ENCODE measurements at regions of chr5 and their contacts with region 1.

Region 1: GRCh38 chr5:178279725-178280438 is 47.3 kb upstream of the PHYKPL start:
- DNase-seq: peak; percentile 87
- H3K4me3 Mint-ChIP-seq: no peak overlapping the region
- H3K27ac Mint-ChIP-seq: no peak overlapping the region
- H3K4me1 Mint-ChIP-seq: peaks cover 30% of the 10 kb centered on the region
- H3K27me3 Mint-ChIP-seq: no peaks in the 10 kb centered on the region
- CTCF ChIP-seq: peak; percentile 99

Region 2: DNA sequence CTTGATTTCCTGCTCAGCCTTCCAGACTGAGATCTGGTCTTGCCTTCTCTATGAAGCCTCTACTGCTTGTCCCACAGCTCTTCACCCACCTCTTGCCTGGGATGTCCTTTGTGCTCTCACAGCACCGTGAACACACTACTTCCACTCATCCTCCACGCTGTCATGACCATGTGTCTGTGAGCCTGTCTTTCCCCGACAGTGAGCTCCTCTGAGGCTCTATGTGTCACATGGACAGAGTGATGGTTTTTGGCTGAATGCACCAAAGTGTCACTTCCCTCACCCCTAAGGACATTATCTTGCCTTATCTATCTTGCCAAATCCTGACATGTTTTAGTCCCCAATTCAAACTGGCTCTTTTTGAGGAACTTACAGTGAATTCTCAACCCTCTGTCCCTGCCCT is 58.6 kb before region 1 on chr5:
- CTCF ChIA-PET with region 1: no interaction called
- POLR2A ChIA-PET with region 1: no interaction called
- intact Hi-C with region 1: no loop called
- DNase-seq: no peak
- H3K4me3 Mint-ChIP-seq: no peak overlapping the region
- H3K27ac Mint-ChIP-seq: peak overlapping the region; percentile 8
- H3K4me1 Mint-ChIP-seq: peaks cover 21% of the 10 kb centered on the region
- H3K27me3 Mint-ChIP-seq: no peaks in the 10 kb centered on the region
- CTCF ChIP-seq: no peak

Region 3: GRCh38 chr5:178461004-178461730 is 181.3 kb after region 1 on chr5:
- CTCF ChIA-PET with region 1: interaction called, 13 read pairs
- POLR2A ChIA-PET with region 1: no interaction called
- intact Hi-C with region 1: no loop called
- DNase-seq: peak; percentile 77
- H3K4me3 Mint-ChIP-seq: no peak overlapping the region
- H3K27ac Mint-ChIP-seq: no peak overlapping the region
- H3K4me1 Mint-ChIP-seq: peaks cover 5% of the 10 kb centered on the region
- H3K27me3 Mint-ChIP-seq: no peaks in the 10 kb centered on the region
- CTCF ChIP-seq: peak; percentile 95

Region 4: GRCh38 chr5:178551059-178551458 is 271.2 kb after region 1 on chr5:
- CTCF ChIA-PET with region 1: interaction called, 266 read pairs
- POLR2A ChIA-PET with region 1: interaction called, 4 read pairs
- intact Hi-C with region 1: loop called (anchors 1 kb)
- DNase-seq: peak; percentile 46
- H3K4me3 Mint-ChIP-seq: no peak overlapping the region
- H3K27ac Mint-ChIP-seq: no peak overlapping the region
- H3K4me1 Mint-ChIP-seq: peaks cover 6% of the 10 kb centered on the region
- H3K27me3 Mint-ChIP-seq: no peaks in the 10 kb centered on the region
- CTCF ChIP-seq: peak; percentile 30